ENCODE measurements at regions of chr2 and their contacts with region 1.

Region 1: GRCh38 chr2:237413777-237414661 is at the start of gene COL6A3:
- DNase-seq: no peak
- H3K4me3 ChIP-seq: peak within 1 kb of the TSS; percentile 45 to 67
- H3K27ac ChIP-seq: peak within 1 kb of the TSS; percentile 76 to 77
- H3K4me1 ChIP-seq: peaks cover 9 to 12% of the 10 kb centered on the region in 2 donors
- H3K27me3 ChIP-seq: no peaks in the 10 kb centered on the region
- CTCF ChIP-seq: no peak
- total RNA-seq, gene COL6A3: 156 TPM

Region 2: GRCh38 chr2:236164201-236164982 is 1249.6 kb before region 1 on chr2:
- intact Hi-C with region 1: no loop called
- DNase-seq: no peak
- H3K4me3 ChIP-seq: peak overlapping the region; percentile 14 to 62
- H3K27ac ChIP-seq: no peak overlapping the region
- H3K4me1 ChIP-seq: peaks cover 18 to 22% of the 10 kb centered on the region in 2 donors
- H3K27me3 ChIP-seq: peaks cover 34% of the 10 kb centered on the region
- CTCF ChIP-seq: no peak

Region 3: DNA sequence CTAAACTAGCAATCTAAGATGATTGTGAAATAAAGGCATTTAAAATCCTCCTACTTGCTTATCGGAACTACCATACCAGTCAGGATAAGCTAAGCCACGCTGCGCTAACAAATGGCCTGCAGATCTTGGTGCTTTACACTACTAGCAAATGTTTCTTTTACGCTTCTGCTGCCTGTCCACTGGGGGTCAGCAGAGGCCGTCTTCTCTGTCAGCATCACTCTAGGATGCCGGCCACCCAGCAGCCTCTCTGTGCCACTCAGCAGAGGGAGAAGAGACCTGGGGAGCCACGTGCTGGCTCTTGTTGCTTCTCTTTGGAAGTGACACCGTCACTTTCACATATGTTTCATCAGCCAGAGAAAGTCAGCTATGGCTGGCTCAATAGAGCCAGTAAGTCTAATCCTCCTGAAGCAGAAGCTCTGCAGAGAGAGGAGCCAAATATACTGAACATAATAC is 291.8 kb before region 1 on chr2:
- intact Hi-C with region 1: loop called (anchors 10 kb)
- DNase-seq: peak in 1 of 2 donors; percentile 76
- H3K4me3 ChIP-seq: no peak overlapping the region
- H3K27ac ChIP-seq: no peak overlapping the region
- H3K4me1 ChIP-seq: no peaks in the 10 kb centered on the region
- H3K27me3 ChIP-seq: no peaks in the 10 kb centered on the region
- CTCF ChIP-seq: peak; percentile 68 to 71 (median 69)

Region 4: GRCh38 chr2:237171396-237171795 is 242.6 kb before region 1 on chr2:
- intact Hi-C with region 1: loop called (anchors 2 kb)
- DNase-seq: no peak
- H3K4me3 ChIP-seq: peak overlapping the region in 1 of 2 donors; percentile 31
- H3K27ac ChIP-seq: peak overlapping the region; percentile 32 to 67
- H3K4me1 ChIP-seq: peaks cover 0 to 6% of the 10 kb centered on the region in 2 donors
- H3K27me3 ChIP-seq: no peaks in the 10 kb centered on the region
- CTCF ChIP-seq: peak in 2 of 3 experiments; percentile 39 to 44

Region 5: DNA sequence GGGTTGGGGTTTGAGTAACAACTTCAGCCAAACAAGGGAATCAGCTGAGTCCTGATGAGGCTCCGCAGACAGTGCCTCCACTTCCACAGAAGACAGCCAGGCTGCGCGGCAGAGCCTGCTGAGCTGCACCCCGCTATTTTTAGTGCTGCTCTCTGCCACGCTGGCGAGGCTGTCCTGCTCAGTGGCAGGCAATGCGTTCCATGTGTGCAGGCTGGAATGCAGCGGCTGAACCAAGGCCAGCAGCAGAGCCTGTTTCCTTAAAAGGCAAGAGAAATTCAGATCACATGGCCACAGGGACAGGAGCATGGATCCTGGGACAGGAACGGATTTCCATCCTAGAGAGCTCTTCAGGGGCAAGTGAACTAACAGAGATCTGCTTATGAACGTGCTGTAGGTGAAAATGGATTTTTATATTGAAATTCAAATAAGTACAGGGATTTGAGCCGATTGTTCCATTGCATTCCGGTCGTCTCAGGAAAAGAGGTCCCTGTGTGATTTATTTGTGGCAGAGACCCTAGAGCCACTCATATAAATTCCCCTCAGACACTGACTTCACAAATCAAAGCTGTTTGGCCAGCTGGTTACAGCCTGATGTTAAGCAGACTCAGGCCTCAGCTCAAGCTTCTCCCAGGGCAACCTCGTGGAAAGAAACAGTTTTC is 98.7 kb before region 1 on chr2:
- intact Hi-C with region 1: loop called (anchors 2 kb)
- DNase-seq: peak; percentile 69 to 96
- H3K4me3 ChIP-seq: peak overlapping the region in 1 of 2 donors; percentile 26
- H3K27ac ChIP-seq: peak overlapping the region; percentile 95 to 99
- H3K4me1 ChIP-seq: peaks cover 19 to 31% of the 10 kb centered on the region in 2 donors
- H3K27me3 ChIP-seq: no peaks in the 10 kb centered on the region
- CTCF ChIP-seq: peak; percentile 43 to 77 (median 75)

Measured in ascending aorta (tissue), 2 donors.